ENCODE measurements at regions of chr1 and their contacts with region 1.

Region 1: GRCh38 chr1:93021539-93022134 is 57.4 kb upstream of the MTF2 start:
- DNase-seq: peak in 7 of 9 donors; percentile 16 to 64 (median 55)
- ATAC-seq: peak; percentile 78
- H3K4me3 ChIP-seq: no peak overlapping the region
- H3K4me3 Mint-ChIP-seq: no peak overlapping the region
- H3K27ac ChIP-seq: no peak overlapping the region
- H3K27ac Mint-ChIP-seq: no peak overlapping the region
- H3K4me1 ChIP-seq: peaks cover 0 to 4% of the 10 kb centered on the region in 2 donors
- H3K4me1 Mint-ChIP-seq: peaks cover 0 to 7% (median 5%) of the 10 kb centered on the region in 7 donors
- H3K27me3 ChIP-seq: no peaks in the 10 kb centered on the region
- H3K27me3 Mint-ChIP-seq: peaks cover 0 to 48% (median 3%) of the 10 kb centered on the region in 5 donors

Region 2: GRCh38 chr1:93123201-93123783 is 101.7 kb after region 1 on chr1:
- CTCF ChIA-PET with region 1: interaction called, 4 read pairs
- POLR2A ChIA-PET with region 1: no interaction called
- intact Hi-C with region 1: loop called in 1 of 2 experiments (anchors 5 kb)
- DNase-seq: no peak
- ATAC-seq: no peak
- H3K4me3 ChIP-seq: no peak overlapping the region
- H3K4me3 Mint-ChIP-seq: no peak overlapping the region
- H3K27ac ChIP-seq: no peak overlapping the region
- H3K27ac Mint-ChIP-seq: no peak overlapping the region
- H3K4me1 ChIP-seq: no peaks in the 10 kb centered on the region
- H3K4me1 Mint-ChIP-seq: peaks cover 2 to 11% (median 6%) of the 10 kb centered on the region in 7 donors
- H3K27me3 ChIP-seq: no peaks in the 10 kb centered on the region
- H3K27me3 Mint-ChIP-seq: no peaks in the 10 kb centered on the region

Measured in naive thymus-derived CD4-positive, alpha-beta T cell (primary cell).